CD4-positive, alpha-beta T cell (primary cell): ENCODE measurements at regions of chr1 and their contacts with region 1.

Region 1: DNA sequence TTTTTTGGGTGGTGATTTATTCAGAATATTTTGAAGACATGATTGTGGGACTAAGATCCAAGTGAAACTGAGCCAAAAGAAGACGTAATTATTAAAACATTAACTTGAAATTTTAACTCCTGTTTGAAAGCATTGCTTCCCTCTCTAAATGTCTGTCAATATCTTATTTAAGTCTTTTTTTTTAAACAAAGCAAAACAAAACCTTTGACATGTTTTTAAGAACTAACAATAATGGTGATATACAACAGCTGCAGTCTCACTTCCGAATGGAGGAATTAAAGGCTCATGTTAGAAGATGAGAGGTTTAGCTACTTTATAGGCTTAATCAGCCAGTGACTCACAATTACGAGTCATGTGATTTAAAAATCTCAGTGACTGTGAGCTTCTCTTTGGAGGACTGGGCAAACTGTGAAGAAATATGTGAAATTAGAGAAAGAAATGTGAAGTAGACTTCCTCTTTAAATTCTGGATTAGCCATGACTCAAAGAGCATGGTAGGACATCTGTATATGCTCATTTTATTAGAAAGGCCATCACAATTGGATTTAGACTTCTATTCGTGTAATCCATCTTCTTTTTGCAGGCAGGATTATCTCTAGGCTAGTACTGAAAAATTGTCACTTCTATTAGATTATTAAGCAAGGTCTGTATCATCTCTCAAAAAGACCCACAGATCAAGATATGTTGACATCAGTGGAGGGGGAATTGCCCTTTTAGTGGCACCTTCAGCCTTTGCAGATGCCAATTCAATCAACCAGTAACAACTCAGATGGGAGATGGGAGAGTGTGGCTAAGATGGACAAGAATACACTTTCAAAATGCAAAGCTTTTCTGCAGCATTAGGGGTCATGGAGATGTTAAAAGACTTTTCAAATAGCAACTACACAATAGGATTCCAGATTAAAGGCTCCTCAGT is 28.7 kb downstream of the KCNA3 start:
- DNase-seq: peak in 3 of 14 experiments; percentile 45 to 71 (median 62)
- ATAC-seq: no peak
- H3K4me3 ChIP-seq: no peak overlapping the region
- H3K4me3 Mint-ChIP-seq: peak overlapping the region; percentile 43
- H3K27ac ChIP-seq: no peak overlapping the region
- H3K27ac Mint-ChIP-seq: no peak overlapping the region
- H3K4me1 ChIP-seq: peaks cover 77% of the 10 kb centered on the region
- H3K4me1 Mint-ChIP-seq: peaks cover 46% of the 10 kb centered on the region
- H3K27me3 ChIP-seq: no peaks in the 10 kb centered on the region
- H3K27me3 Mint-ChIP-seq: no peaks in the 10 kb centered on the region
- CTCF ChIP-seq: no peak

Region 2: DNA sequence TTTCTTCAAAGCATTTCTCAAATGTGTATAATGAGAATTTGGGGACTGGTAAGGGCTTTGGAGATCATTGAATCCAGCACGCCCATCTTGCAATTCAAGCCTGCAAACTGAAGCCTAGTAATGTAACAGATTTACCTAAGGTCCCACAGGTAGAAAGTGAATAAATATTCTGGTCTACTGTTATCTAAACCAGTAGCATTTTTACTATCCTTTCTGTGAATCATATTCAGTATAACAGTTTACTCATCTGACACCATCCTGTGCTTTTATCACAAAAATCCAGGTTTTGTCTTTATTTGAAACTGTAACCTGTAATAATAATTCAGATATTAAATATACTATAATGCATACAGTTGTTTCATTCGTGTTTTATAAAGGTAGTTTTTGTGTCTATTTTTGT is 11.3 kb after region 1 on chr1:
- CTCF ChIA-PET with region 1: no interaction called
- POLR2A ChIA-PET with region 1: interaction called, 8 read pairs
- intact Hi-C with region 1: loop called in 1 of 2 experiments (anchors 2 kb)
- DNase-seq: no peak
- ATAC-seq: no peak
- H3K4me3 ChIP-seq: no peak overlapping the region
- H3K4me3 Mint-ChIP-seq: no peak overlapping the region
- H3K27ac ChIP-seq: no peak overlapping the region
- H3K27ac Mint-ChIP-seq: peak overlapping the region; percentile 74
- H3K4me1 ChIP-seq: peaks cover 6% of the 10 kb centered on the region
- H3K4me1 Mint-ChIP-seq: peaks cover 60% of the 10 kb centered on the region
- H3K27me3 ChIP-seq: no peaks in the 10 kb centered on the region
- H3K27me3 Mint-ChIP-seq: no peaks in the 10 kb centered on the region
- CTCF ChIP-seq: no peak

Region 3: DNA sequence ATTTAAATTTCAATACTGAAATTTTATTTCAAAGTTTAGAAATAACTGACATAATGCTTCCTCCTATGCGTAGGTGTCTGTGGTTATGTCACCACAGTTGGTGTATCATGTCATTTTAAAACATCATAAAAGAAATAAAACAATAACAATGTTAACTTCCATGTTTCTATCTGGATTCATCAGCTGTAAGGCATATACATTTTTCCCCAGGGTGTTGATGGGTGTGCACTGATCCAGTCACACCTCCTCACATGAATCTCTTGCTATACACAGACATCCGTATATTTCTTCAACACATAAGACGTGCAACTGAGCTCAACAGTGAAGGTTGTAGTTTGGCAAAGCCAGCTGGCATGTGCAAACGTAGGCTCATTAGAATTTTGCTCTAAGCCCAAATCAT is 22.5 kb after region 1 on chr1:
- CTCF ChIA-PET with region 1: interaction called, 13 read pairs
- POLR2A ChIA-PET with region 1: interaction called, 63 read pairs
- intact Hi-C with region 1: loop called in 1 of 2 experiments (anchors 1 kb)
- DNase-seq: peak in 4 of 14 experiments; percentile 5 to 68 (median 54)
- ATAC-seq: peak; percentile 23
- H3K4me3 ChIP-seq: peak overlapping the region; percentile 99
- H3K4me3 Mint-ChIP-seq: peak overlapping the region; percentile 80
- H3K27ac ChIP-seq: peak overlapping the region; percentile 33 to 39
- H3K27ac Mint-ChIP-seq: no peak overlapping the region
- H3K4me1 ChIP-seq: peaks cover 26% of the 10 kb centered on the region
- H3K4me1 Mint-ChIP-seq: peaks cover 52% of the 10 kb centered on the region
- H3K27me3 ChIP-seq: no peaks in the 10 kb centered on the region
- H3K27me3 Mint-ChIP-seq: no peaks in the 10 kb centered on the region
- CTCF ChIP-seq: no peak

Region 4: DNA sequence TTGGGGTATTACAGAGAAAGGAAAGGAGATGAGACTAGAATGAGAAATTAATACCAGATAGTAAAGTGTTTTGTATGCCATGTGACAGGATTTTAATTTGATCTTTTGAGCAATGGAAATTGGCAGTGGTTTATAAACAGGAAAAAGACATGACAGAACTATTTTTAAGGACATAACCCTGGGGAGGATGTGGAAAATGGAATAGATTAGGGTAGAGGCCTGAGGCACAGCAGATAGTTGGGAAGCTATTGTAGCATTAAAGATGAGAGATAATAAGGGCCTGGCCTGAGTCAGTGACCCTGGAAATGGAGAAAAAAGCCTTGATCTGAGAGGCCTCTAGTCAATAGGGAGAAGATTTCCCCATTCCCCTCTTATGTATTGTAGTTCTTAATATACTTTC is 50.7 kb after region 1 on chr1:
- CTCF ChIA-PET with region 1: no interaction called
- POLR2A ChIA-PET with region 1: no interaction called
- intact Hi-C with region 1: loop called in 1 of 2 experiments (anchors 1 kb)
- DNase-seq: no peak
- ATAC-seq: no peak
- H3K4me3 ChIP-seq: no peak overlapping the region
- H3K4me3 Mint-ChIP-seq: no peak overlapping the region
- H3K27ac ChIP-seq: no peak overlapping the region
- H3K27ac Mint-ChIP-seq: no peak overlapping the region
- H3K4me1 ChIP-seq: no peaks in the 10 kb centered on the region
- H3K4me1 Mint-ChIP-seq: no peaks in the 10 kb centered on the region
- H3K27me3 ChIP-seq: no peaks in the 10 kb centered on the region
- H3K27me3 Mint-ChIP-seq: peaks cover 5% of the 10 kb centered on the region
- CTCF ChIP-seq: no peak